ENCODE measurements at regions of chr2 and their contacts with region 1.

Region 1: DNA sequence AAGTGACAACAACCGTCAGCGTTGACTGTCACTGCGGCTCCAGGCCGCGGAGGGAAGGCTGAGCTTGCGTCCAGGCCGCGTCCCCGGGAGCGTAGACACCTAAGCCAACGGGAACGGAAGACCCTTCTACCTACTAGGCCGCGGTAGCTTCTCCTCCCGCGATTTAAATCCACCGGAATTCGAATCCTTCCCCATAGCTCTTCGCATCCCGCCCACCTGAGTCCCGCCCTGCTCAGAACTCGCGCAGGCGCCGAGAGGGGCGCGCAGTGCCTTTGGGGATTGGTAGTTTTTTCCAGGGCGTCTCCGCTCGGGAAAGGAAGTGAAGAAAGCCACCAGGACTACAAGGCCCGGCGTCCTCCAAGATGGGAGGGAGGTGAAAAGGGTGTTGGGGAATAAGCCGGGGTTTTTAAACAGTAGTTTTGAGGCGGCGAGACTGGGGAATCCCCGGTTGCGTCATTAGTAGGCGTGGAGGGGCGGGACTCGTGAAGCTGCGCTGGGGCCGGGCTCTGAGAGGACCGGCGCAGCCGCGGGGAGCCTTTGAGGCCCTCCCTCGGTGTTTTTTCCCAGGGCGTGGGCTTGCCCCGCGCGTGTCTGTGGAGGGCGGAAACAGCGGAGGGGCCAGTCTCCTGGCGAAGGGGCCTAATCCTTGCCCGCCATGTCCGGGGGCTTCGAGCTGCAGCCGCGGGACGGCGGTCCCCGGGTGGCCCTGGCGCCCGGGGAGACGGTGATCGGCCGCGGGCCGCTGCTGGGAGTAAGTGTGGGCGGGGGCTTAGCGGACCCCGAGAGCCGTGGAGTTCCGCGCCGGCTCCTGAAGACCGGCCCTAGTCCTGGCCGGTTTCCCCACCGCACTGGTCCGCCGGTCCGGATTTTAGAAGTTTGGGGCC is at the starts of genes APLF and FBXO48:
- DNase-seq: peak; percentile 100
- ATAC-seq: peak; percentile 96
- H3K4me3 ChIP-seq: peak within 1 kb of the TSS; percentile 87 to 95 (median 90)
- H3K27ac ChIP-seq: peak within 1 kb of the TSS; percentile 70
- H3K4me1 ChIP-seq: peaks cover 28% of the 10 kb centered on the region
- H3K27me3 ChIP-seq: no peaks in the 10 kb centered on the region; a peak in 1 of 5 replicates
- CTCF ChIP-seq: peak; percentile 19; the same call in 1 of the 2 replicates
- EP300 ChIP-seq: peak in 1 of 2 experiments; percentile 60; a peak in 3 of 4 replicates
- POLR2A ChIP-seq: peak; percentile 76 to 80
- RAD21 ChIP-seq: peak; percentile 66
- total RNA-seq, gene APLF: 2.0 and 2.2 TPM in 2 replicates
- total RNA-seq, gene FBXO48: 0.42 and 0.59 TPM in 2 replicates

Region 2: GRCh38 chr2:68423966-68424650 is 43.2 kb before region 1 on chr2:
- CTCF ChIA-PET with region 1: no interaction called
- POLR2A ChIA-PET with region 1: no interaction called
- in situ Hi-C with region 1: no loop called
- intact Hi-C with region 1: no loop called
- DNase-seq: no peak
- ATAC-seq: no peak
- H3K4me3 ChIP-seq: no peak overlapping the region
- H3K27ac ChIP-seq: no peak overlapping the region
- H3K4me1 ChIP-seq: no peaks in the 10 kb centered on the region
- H3K27me3 ChIP-seq: peaks cover 0 to 11% of the 10 kb centered on the region in 2 experiments; a peak in 3 of 5 replicates
- CTCF ChIP-seq: no peak
- EP300 ChIP-seq: no peak
- POLR2A ChIP-seq: no peak
- RAD21 ChIP-seq: no peak

Region 3: GRCh38 chr2:68487773-68488355 is 20.5 kb after region 1 on chr2:
- CTCF ChIA-PET with region 1: no interaction called
- POLR2A ChIA-PET with region 1: no interaction called
- in situ Hi-C with region 1: no loop called
- intact Hi-C with region 1: loop called (anchors 1 kb)
- DNase-seq: peak; percentile 20
- ATAC-seq: peak; percentile 46; the same call in 1 of the 3 replicates
- H3K4me3 ChIP-seq: no peak overlapping the region
- H3K27ac ChIP-seq: no peak overlapping the region
- H3K4me1 ChIP-seq: no peaks in the 10 kb centered on the region
- H3K27me3 ChIP-seq: no peaks in the 10 kb centered on the region
- CTCF ChIP-seq: peak; percentile 47
- EP300 ChIP-seq: no peak
- POLR2A ChIP-seq: no peak
- RAD21 ChIP-seq: no peak

Region 4: DNA sequence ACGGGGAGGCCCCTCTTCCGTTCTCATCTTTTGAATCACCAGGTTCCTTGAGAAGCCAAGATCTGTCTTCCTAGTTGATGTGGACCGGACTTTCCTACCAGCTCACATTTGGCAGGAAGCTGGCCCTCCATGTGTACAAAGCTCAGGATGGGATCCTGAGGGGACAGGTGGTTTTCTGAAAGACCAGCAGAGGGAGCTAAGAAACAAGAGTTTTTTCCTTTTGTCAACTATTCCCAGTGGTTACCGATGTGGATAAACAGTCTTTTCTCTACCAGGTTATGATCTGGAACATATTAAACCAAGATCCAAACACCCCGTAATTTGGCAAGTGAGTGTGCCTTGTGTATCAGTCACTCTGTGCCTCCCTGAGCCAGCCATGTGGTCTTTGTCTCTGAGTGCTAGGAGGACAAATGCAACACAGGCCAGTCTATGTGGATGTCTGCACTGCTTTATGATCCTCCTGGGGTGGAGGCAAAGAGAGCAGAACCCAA is 242.1 kb after region 1 on chr2:
- CTCF ChIA-PET with region 1: interaction called, 48 read pairs
- POLR2A ChIA-PET with region 1: no interaction called
- in situ Hi-C with region 1: loop called (anchors 5 kb)
- intact Hi-C with region 1: no loop called
- DNase-seq: peak; percentile 57
- ATAC-seq: peak; percentile 96
- H3K4me3 ChIP-seq: no peak overlapping the region
- H3K27ac ChIP-seq: no peak overlapping the region
- H3K4me1 ChIP-seq: no peaks in the 10 kb centered on the region
- H3K27me3 ChIP-seq: no peaks in the 10 kb centered on the region; a peak in 1 of 5 replicates
- CTCF ChIP-seq: peak; percentile 77
- EP300 ChIP-seq: no peak
- POLR2A ChIP-seq: no peak
- RAD21 ChIP-seq: no peak

Region 5: DNA sequence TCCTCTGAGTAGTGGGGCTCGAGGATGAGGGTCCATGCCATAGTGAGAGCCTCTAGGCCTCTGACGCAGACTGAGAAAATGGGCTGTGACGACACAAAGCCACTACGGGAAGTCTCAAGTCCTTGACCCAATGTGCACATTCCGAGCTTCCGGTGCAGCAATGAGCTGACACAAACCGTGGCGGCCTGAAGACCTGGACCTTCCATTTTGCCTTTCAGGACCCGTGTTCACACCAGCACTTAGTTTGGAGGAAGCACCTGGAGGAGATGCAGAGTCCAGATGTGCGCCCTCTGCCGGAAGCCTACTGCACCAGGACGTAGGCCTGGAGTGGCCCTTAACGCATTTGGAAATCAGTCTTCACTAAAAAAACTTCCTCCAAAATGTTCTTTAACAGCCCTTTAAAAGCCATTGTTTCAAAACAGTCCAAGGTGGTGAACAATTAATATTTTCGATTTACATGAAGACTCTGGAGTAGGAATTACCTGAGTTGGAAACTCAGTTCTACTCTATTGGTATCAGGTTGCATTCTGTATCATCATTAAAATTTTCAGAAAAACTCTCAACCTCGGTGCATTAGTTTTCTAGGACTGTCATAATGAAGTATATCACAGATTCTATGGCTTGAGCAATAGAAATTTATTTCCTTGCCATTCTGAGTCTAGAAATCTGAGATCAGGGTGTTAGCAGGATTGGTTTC is 370.0 kb after region 1 on chr2:
- CTCF ChIA-PET with region 1: interaction called, 3 read pairs
- POLR2A ChIA-PET with region 1: no interaction called
- in situ Hi-C with region 1: no loop called
- intact Hi-C with region 1: loop called (anchors 1 kb)
- DNase-seq: peak; percentile 55
- ATAC-seq: peak; percentile 97
- H3K4me3 ChIP-seq: no peak overlapping the region
- H3K27ac ChIP-seq: no peak overlapping the region
- H3K4me1 ChIP-seq: no peaks in the 10 kb centered on the region
- H3K27me3 ChIP-seq: peaks cover 4 to 8% of the 10 kb centered on the region in 2 experiments; a peak in 3 of 5 replicates
- CTCF ChIP-seq: peak; percentile 86
- EP300 ChIP-seq: no peak
- POLR2A ChIP-seq: no peak
- RAD21 ChIP-seq: peak; percentile 58

Region 6: DNA sequence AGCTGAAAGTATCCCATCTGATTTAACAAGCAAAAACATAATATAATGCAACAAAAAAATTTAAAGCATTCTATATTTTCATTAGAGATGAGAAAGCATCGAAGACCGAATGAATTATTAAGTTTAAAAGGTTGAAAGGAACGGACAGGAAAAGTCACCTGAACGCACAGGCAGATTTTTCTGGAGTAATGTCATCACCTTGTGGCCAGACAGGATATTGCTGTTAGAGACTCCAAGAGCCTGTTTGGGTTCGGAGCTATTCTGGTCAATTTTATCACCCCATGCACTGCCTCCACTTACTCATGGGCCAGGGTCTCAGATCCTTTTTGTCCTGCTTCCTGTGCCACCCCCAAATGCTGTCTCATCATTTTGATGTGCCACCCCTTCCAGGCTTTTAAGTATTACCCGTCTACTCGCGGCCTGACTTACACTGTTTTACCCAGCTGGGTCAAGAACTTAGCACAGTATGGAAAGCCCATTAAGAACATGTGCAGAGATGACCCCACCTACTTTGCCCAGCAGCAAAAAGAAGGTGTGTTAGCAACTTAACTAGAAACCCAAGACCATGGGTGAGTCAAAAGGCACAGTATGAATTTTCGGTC is 458.1 kb after region 1 on chr2:
- CTCF ChIA-PET with region 1: interaction called, 5 read pairs
- POLR2A ChIA-PET with region 1: no interaction called
- in situ Hi-C with region 1: loop called (anchors 10 kb)
- intact Hi-C with region 1: loop called (anchors 5 kb)
- DNase-seq: peak; percentile 55
- ATAC-seq: peak; percentile 89
- H3K4me3 ChIP-seq: no peak overlapping the region
- H3K27ac ChIP-seq: no peak overlapping the region
- H3K4me1 ChIP-seq: peaks cover 8% of the 10 kb centered on the region; the same call in 1 of the 2 replicates
- H3K27me3 ChIP-seq: peaks cover 0 to 35% of the 10 kb centered on the region in 2 experiments; a peak in 4 of 5 replicates
- CTCF ChIP-seq: peak; percentile 85
- EP300 ChIP-seq: no peak
- POLR2A ChIP-seq: no peak
- RAD21 ChIP-seq: peak; percentile 76

Measured in HepG2 (cell line).